ENCODE measurements at regions of chr17 and their contacts with region 1.

Region 1: GRCh38 chr17:29180034-29180787 is at the start of gene MYO18A:
- DNase-seq: peak; percentile 82

Region 2: DNA sequence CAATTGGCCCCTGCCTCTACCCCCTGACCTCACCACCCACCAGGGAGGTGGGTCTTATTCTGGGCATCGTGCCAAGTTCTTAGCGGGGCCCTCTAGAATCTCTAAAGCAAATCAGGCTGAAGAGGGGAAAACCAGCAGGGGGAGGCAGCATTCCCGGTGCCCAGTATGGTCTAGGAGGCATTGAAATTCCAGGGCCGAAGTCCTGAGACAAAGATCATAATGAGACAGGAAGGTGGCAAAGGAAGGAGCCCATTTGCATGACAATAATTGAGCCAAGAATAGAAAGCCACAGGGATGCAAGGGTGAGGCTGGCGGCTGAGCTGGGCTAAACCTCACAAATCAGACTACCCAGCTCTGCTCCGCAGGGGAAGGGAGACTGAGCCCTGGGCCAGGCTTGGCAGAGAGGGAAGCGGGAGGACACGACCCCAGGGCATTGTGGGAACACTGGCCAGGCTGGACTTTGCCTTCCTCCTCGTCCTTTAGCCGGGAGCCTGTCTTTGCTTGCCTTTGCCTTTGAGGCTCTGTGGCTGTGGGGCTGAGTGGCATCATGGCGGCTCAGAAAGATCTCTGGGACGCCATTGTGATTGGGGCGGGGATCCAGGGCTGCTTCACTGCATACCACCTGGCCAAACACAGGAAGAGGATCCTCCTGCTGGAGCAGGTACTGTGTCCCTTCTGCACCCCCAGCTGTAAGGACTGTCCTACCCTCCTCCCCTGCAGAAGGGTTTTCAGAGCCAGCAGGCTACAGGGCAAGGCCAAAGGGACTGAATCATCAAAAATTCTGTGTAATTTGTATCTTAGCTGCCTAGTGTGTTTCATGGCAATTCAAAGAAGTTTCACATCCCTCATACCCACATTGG is 137.3 kb before region 1 on chr17 and contains the start of gene PIPOX:
- CTCF ChIA-PET with region 1: no interaction called
- POLR2A ChIA-PET with region 1: no interaction called
- DNase-seq: peak; percentile 54

Region 3: DNA sequence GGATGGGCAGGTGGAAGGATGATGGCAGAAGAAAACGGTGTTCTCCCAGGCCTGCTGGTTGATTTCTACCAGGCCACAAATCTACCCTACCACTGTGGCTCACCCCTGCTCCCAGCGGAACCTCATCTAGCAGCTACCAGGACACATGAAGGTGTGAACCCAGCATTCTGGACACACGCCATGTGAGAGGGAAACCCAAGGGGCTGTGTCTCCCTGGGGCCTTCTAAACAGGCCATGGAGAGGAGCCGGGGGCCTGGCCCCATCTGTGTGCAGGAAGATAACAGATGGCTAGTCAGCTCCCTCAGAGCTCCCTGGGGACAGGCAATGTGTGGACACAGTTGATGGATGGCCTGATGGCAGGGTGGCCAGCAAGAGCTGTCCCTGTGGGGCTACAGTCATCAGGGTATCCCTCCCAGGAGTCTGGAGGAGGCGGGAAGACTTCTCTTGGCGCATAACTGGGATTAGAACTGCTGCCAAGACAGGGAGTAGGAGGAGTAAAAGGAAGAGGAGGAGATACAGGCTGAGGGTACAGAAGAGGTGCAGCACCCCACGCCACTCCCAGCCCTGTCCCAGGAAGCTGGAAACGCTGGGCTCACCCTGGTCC is 17.4 kb before region 1 on chr17:
- CTCF ChIA-PET with region 1: interaction called, 14 read pairs
- POLR2A ChIA-PET with region 1: interaction called, 7 read pairs
- DNase-seq: no peak